ENCODE measurements at regions of chr9 and their contacts with region 1.

Region 1: DNA sequence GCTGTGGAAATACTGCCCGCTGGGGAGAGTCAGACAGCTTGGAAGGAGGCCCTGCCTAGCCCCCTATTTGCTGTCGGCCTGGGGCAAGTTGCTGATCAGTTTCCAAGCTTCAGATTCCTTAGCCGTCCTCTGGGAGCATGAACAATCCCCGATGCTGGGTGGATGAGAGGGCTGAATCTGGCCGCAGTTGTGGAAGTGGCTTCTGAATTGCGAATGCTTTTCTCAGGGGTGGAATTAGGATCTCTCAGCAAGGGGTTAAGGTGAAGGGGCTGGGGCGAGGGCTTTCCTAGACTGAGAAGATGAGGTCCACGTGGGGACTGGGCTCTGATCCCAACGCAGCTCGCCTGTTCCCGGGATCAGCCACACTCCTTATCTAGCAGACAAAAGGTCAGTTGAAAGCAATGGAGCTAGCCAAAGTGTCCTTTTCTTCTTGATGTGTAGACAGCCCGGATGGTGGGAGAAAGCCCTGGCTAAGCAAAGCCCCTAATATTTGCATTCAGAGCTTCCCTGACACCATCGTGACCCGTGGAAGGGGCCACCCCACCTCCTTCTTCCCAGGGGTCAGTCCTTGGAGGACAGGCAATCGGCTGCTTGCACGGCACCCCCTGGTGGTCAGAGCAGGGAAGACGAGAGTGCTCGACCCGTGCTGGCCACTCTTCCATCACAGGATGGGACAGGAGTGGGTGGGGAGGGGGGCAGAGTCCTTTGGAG is 54.9 kb downstream of the COL15A1 start:
- DNase-seq: peak; percentile 85 to 93 (median 87)
- H3K4me3 ChIP-seq: no peak overlapping the region
- H3K27ac ChIP-seq: peak overlapping the region in 4 of 5 donors; percentile 29 to 67 (median 44)
- H3K4me1 ChIP-seq: peaks cover 6 to 38% of the 10 kb centered on the region in 2 donors
- H3K27me3 ChIP-seq: no peaks in the 10 kb centered on the region
- CTCF ChIP-seq: peak; percentile 86 to 94 (median 92)
- POLR2A ChIP-seq: no peak

Region 2: DNA sequence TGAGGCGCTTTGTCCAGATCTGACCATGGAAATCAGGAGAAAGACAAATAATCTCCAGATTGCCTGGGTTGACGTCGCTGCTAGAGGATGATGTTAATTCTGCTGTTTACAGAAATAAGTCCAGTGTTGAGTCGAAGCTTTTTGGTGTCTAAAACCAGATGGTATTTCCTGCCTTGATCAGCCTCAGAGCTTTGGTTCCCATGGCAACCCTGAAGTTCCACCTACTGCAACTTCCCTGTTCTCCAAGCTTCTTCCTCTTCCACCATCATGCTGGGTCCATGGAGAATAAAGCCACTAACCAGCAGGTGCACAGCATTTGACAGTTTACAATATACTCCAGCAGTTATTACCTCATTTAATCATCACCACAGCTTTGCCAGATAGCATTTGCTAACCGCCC is 271.9 kb before region 1 on chr9:
- intact Hi-C with region 1: no loop called
- DNase-seq: peak in 4 of 7 donors; percentile 16 to 47 (median 28)
- H3K4me3 ChIP-seq: no peak overlapping the region
- H3K27ac ChIP-seq: no peak overlapping the region
- H3K4me1 ChIP-seq: no peaks in the 10 kb centered on the region
- H3K27me3 ChIP-seq: peaks cover 19% of the 10 kb centered on the region
- CTCF ChIP-seq: no peak
- POLR2A ChIP-seq: no peak

Region 3: GRCh38 chr9:98851730-98852459 is 146.7 kb before region 1 on chr9:
- intact Hi-C with region 1: loop called (anchors 5 to 10 kb)
- DNase-seq: peak in 1 of 7 donors; percentile 27
- H3K4me3 ChIP-seq: no peak overlapping the region
- H3K27ac ChIP-seq: no peak overlapping the region
- H3K4me1 ChIP-seq: peaks cover under 1 to 13% of the 10 kb centered on the region in 2 donors
- H3K27me3 ChIP-seq: no peaks in the 10 kb centered on the region
- CTCF ChIP-seq: no peak
- POLR2A ChIP-seq: no peak

Region 4: DNA sequence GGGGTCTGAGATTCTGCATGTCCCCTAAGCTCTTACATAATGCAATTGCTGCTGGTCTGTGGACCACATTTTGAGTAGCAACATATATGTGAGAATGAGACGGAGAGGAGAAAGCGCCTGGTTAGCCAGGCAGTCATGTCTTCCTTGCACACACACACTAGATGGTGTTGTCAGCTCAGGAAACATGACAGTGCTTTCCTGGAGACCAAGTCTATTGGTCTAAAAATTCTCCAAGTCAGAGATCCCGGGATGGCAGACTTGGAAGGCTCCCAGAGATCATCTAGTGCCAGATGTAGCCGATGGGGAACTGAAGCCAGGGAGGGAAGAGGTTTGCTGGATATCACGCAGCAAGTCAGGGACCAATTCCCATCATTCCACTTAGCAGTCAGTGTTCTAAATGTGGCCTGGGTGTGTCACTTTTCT is 137.7 kb before region 1 on chr9:
- intact Hi-C with region 1: loop called (anchors 5 to 10 kb)
- DNase-seq: peak; percentile 81 to 96 (median 89)
- H3K4me3 ChIP-seq: no peak overlapping the region
- H3K27ac ChIP-seq: peak overlapping the region in 1 of 5 donors; percentile 28
- H3K4me1 ChIP-seq: peaks cover 4 to 6% of the 10 kb centered on the region in 2 donors
- H3K27me3 ChIP-seq: no peaks in the 10 kb centered on the region
- CTCF ChIP-seq: peak; percentile 43 to 87 (median 76)
- POLR2A ChIP-seq: no peak

Region 5: DNA sequence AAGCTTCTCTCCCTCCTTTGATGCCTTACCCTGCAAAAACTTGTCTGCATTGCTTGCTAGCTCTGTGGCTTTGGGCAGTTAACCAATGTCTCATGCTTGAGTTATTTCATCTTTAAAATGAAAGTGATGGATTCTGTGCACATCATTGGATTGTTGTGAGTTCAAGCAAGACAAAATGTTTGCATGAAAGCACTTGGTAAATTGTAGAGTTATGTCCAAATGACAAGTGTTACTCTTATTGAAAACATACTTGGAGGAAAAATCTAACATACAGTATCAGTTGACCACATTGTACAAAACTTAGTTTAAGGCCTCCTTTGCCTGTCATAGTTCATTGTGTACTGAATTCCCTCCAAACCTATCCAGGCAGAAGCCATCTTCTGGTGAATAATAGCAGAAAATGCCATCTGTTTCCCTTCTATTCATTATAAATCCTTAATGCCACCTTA is 136.3 kb after region 1 on chr9:
- intact Hi-C with region 1: loop called in 1 of 2 experiments (anchors 5 kb)
- DNase-seq: no peak
- H3K4me3 ChIP-seq: no peak overlapping the region
- H3K27ac ChIP-seq: no peak overlapping the region
- H3K4me1 ChIP-seq: no peaks in the 10 kb centered on the region
- H3K27me3 ChIP-seq: no peaks in the 10 kb centered on the region
- CTCF ChIP-seq: no peak
- POLR2A ChIP-seq: no peak